Transverse colon (tissue), 4 donors: ENCODE measurements at regions of chr3 and their contacts with region 1.

Region 1: DNA sequence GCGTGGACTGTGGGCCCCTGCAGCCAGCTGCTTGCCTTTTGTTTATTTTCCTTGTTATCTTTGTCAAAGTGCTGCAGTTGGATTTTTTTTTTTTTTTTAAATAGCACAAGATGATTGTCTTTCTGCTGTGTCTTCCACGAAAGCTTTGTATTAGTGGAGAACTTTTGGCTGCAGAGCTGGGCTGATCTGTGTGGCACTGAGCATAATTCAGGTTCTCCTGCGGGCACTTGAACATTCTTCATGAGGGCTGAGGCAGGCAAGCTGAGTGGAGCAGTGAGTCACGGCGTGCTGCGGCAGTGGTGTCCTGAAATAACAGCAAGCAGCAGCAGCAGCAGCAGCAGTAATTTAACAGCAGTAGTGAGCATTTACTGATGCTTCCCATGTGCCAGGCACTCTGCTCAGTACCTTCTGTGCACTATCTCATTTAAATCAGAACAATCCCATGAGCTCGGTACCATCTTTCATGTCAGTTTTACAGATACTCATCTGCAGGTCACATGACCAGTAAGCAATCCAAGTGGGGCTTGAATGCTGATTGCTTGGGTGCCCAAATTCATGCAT is 45.8 kb downstream of the MITF start:
- DNase-seq: peak; percentile 21
- H3K4me3 ChIP-seq: no peak overlapping the region
- H3K27ac ChIP-seq: peak overlapping the region; percentile 54 to 70 (median 63)
- H3K4me1 ChIP-seq: peaks cover 0 to 36% (median 1%) of the 10 kb centered on the region in 4 donors
- H3K27me3 ChIP-seq: no peaks in the 10 kb centered on the region
- CTCF ChIP-seq: no peak
- EP300 ChIP-seq: no peak
- POLR2A ChIP-seq: no peak

Region 2: GRCh38 chr3:69746119-69746518 is 38.9 kb before region 1 on chr3:
- in situ Hi-C with region 1: no loop called
- intact Hi-C with region 1: loop called (anchors 1 kb)
- DNase-seq: no peak
- H3K4me3 ChIP-seq: no peak overlapping the region
- H3K27ac ChIP-seq: peak overlapping the region; percentile 65 to 91 (median 76)
- H3K4me1 ChIP-seq: peaks cover 13 to 74% (median 34%) of the 10 kb centered on the region in 4 donors
- H3K27me3 ChIP-seq: no peaks in the 10 kb centered on the region
- CTCF ChIP-seq: no peak
- EP300 ChIP-seq: no peak
- POLR2A ChIP-seq: no peak